Activated T-helper 1 cell treated with anti-CD3 and anti-CD28 coated beads, Interleukin-12 subunit alpha, Interleukin-12 subunit beta, Interleukin-2, Interleukin-4 antibody, amounts not matched to agents 30 ng/mL and 10 ng/mL and 1 ng/mL, durations not matched to agents 14 hours and 24 hours and 36 hours (primary cell): ENCODE measurements at regions of chr22 and their contacts with region 1.

Region 1: GRCh38 chr22:18077639-18078328 is at the start of gene PEX26:
- DNase-seq: peak; percentile 95
- H3K4me3 Mint-ChIP-seq: peak within 1 kb of the TSS; percentile 90
- H3K27ac Mint-ChIP-seq: peak within 1 kb of the TSS; percentile 92
- H3K4me1 Mint-ChIP-seq: peaks cover 50% of the 10 kb centered on the region
- H3K27me3 Mint-ChIP-seq: peaks cover 2% of the 10 kb centered on the region
- total RNA-seq, gene PEX26: 50.0 and 54.4 TPM in 2 replicates

Region 2: GRCh38 chr22:16917144-16918003 is 1160.4 kb before region 1 on chr22:
- intact Hi-C with region 1: loop called (anchors 10 kb)
- DNase-seq: peak; percentile 13
- H3K4me3 Mint-ChIP-seq: no peak overlapping the region
- H3K27ac Mint-ChIP-seq: no peak overlapping the region
- H3K4me1 Mint-ChIP-seq: peaks cover 8% of the 10 kb centered on the region
- H3K27me3 Mint-ChIP-seq: peaks cover 12% of the 10 kb centered on the region

Region 3: DNA sequence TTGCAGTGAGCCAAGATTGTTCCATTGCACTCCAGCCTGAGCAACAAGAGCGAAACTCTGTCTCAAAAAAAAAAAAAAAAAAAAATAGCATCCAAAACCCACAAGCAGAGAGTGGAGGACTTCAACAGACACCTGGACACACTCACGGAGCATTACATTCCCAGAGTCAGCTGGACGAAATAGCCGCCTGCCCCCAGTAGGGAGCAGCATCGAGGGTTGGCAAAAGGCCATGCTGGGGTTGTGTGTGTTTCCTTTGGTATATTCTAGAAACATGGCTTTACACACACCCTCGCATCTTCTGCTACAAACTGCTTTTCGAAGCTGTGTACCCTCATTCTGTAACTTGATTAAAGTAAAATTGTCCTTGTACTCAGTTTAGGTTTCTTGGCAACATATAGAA is 863.8 kb before region 1 on chr22:
- intact Hi-C with region 1: loop called (anchors 10 kb)
- DNase-seq: peak; percentile 31
- H3K4me3 Mint-ChIP-seq: no peak overlapping the region
- H3K27ac Mint-ChIP-seq: no peak overlapping the region
- H3K4me1 Mint-ChIP-seq: peaks cover 50% of the 10 kb centered on the region
- H3K27me3 Mint-ChIP-seq: no peaks in the 10 kb centered on the region

Region 4: GRCh38 chr22:17742527-17742902 is 335.3 kb before region 1 on chr22:
- intact Hi-C with region 1: loop called (anchors 1 kb)
- DNase-seq: peak; percentile 38
- H3K4me3 Mint-ChIP-seq: no peak overlapping the region
- H3K27ac Mint-ChIP-seq: no peak overlapping the region
- H3K4me1 Mint-ChIP-seq: no peaks in the 10 kb centered on the region
- H3K27me3 Mint-ChIP-seq: no peaks in the 10 kb centered on the region

Region 5: GRCh38 chr22:17830043-17830961 is 247.5 kb before region 1 on chr22:
- intact Hi-C with region 1: loop called (anchors 1 kb)
- DNase-seq: peak; percentile 70
- H3K4me3 Mint-ChIP-seq: no peak overlapping the region
- H3K27ac Mint-ChIP-seq: no peak overlapping the region
- H3K4me1 Mint-ChIP-seq: peaks cover 5% of the 10 kb centered on the region
- H3K27me3 Mint-ChIP-seq: no peaks in the 10 kb centered on the region

Region 6: GRCh38 chr22:18024276-18024947 is 53.4 kb before region 1 on chr22 and contains the start of gene MICAL3:
- intact Hi-C with region 1: loop called (anchors 5 kb)
- DNase-seq: peak; percentile 67
- H3K4me3 Mint-ChIP-seq: peak within 1 kb of the TSS; percentile 87
- H3K27ac Mint-ChIP-seq: peak within 1 kb of the TSS; percentile 72
- H3K4me1 Mint-ChIP-seq: peaks cover 18% of the 10 kb centered on the region
- H3K27me3 Mint-ChIP-seq: peaks cover 59% of the 10 kb centered on the region
- total RNA-seq, gene MICAL3: 47.8 and 50.6 TPM in 2 replicates

Region 7: GRCh38 chr22:18152519-18152918 is 74.7 kb after region 1 on chr22:
- intact Hi-C with region 1: loop called (anchors 1 kb)
- DNase-seq: peak; percentile 41
- H3K4me3 Mint-ChIP-seq: peak overlapping the region; percentile 91
- H3K27ac Mint-ChIP-seq: peak overlapping the region; percentile 87
- H3K4me1 Mint-ChIP-seq: peaks cover 51% of the 10 kb centered on the region
- H3K27me3 Mint-ChIP-seq: no peaks in the 10 kb centered on the region